Left cardiac atrium (tissue), 4 donors: ENCODE measurements at regions of chr12 and their contacts with region 1.

Region 1: DNA sequence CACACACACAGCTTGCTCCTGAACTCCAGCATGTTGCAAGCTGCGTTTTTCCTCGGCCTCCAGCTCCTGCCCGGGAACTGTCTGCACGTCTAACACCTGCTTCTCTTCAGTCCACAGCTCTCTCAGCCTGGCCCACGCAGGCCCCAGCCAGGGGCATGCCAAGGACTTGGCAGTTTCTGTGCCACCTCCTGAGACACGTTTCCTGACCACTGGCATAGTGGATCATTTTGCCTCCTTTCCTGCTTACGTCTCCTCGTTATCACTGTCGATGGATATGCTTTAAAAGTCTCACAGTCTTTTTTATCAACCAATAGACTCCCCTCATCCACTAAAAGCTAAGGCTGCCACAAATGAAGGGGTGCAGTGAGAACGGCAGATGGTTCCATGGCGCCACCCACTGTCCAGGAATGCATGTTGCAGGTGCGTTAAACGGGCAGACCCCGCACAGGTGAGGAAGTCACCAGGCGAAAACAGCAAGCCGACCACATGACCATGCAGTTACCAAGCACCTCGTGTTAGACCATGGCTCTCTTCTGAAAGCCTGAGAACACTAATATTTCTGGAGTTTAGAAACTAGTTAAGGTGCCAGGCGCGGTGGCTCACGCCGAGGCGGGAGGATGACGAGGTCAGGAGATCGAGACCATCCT is 14.7 kb upstream of the TEAD4 start:
- DNase-seq: peak; percentile 44
- ATAC-seq: peak; percentile 76 to 81

Region 2: GRCh38 chr12:2439332-2440100 is 505.0 kb before region 1 on chr12:
- intact Hi-C with region 1: no loop called
- DNase-seq: no peak
- ATAC-seq: peak; percentile 77 to 83

Region 3: DNA sequence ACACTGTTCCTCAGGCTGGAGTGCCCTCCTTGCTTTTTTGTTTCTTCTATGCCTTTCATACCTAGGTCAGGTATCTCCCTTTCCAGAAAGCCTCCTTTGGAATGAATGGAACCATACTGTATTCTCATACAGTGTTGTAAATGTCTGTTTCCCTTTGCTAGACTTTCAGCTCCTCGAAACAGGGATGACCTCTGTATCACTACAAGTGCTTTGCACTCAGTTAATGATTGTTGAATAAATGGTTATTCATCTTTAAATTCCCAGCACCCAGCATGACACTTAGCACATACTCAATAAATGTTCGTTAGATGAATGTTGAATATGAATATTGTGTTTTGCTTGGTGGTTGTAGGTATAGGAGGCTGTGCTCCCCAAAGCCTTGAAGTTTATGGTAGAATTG is 59.7 kb before region 1 on chr12:
- intact Hi-C with region 1: loop called (anchors 2 to 5 kb)
- DNase-seq: no peak
- ATAC-seq: no peak

Region 4: DNA sequence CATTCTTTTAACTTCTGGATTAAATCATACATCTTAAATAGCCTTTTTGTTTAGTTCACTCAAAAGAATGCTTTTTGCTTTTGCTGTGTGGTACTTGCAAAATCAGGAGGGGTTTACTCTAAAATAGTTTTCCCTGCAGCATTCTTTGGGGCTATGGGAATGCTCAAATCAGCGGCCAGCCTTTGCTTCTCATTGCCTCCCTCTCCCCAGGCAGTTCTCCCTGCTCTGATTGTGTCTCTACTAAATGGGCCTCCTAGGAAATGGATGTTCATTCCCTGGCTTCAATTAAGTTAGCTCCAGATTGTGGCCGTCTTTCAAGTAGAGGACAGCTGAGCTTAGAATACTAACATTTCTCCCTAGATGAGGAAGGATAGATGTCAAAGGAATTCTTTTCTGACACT is 49.5 kb before region 1 on chr12:
- intact Hi-C with region 1: no loop called
- DNase-seq: no peak
- ATAC-seq: no peak

Region 5: DNA sequence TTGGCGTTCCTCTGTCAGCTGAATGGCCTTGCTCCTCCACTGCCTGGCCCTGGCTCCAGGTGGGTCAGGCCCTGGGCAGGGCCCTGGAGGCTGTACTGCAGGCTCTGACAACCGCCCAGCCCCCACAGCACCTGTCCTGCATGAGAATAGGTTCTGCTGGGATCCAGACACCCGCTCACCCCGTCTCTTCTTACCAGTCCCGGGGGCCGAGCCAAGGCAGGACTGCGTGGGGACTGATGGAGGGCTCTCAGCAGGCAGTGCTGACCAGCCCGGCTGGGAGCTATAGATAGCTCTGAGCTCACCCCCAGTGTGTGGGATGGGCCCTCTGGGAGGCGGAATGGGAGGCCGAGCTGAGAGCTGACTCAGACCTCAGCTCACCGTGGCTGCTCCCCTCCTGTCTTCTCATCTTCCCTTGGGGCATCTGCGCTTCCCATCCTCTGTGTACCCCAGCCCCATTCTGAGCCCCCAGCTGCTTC is 54.3 kb after region 1 on chr12:
- intact Hi-C with region 1: no loop called
- DNase-seq: peak; percentile 77
- ATAC-seq: peak; percentile 94 to 97